Activated naive CD8-positive, alpha-beta T cell treated with anti-CD3 and anti-CD28 coated beads, Interleukin-2, amount 10 ng/mL, durations not matched to agents 7 days and 5 days (primary cell): ENCODE measurements at regions of chr22 and their contacts with region 1.

Region 1: GRCh38 chr22:36775964-36776669 is at the start of gene IFT27:
- DNase-seq: peak; percentile 92
- ATAC-seq: peak; percentile 95
- H3K4me3 Mint-ChIP-seq: peak within 1 kb of the TSS; percentile 83
- H3K27ac Mint-ChIP-seq: peak within 1 kb of the TSS; percentile 92
- H3K4me1 Mint-ChIP-seq: peaks cover 22% of the 10 kb centered on the region
- H3K27me3 Mint-ChIP-seq: no peaks in the 10 kb centered on the region
- total RNA-seq, gene IFT27: 23.5 to 27.8 TPM

Region 2: DNA sequence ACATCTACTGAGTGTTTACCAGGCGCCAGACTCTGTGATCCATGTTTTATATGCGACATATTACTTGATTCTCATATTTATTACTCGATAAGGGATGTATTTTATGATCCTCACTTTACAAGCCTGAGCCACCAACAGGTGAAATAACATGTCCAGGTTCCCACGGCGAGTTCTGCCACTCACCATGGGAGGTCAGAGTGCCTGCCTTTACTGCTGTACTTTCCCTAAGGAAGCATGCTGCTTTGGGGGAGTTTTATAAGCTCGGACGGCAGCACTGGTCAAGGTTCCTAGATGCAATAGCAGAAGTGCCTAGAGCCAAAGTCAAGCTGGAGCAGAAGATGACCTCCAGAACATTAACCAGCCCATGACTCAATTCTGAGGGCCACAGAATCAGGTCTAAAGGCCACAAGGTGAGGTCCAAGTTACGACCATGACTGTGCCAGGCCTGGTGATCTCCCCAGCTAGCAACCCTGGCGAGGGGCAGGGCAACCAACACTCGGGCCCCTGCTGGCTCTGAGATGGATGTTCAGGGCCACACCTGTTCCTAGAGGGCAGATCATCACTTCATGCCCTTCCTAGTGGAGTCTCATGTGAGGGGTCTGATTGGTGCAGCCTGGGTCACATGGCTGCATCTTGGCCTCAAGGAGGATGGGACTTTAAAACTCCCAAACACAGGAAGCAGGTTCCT is 14.4 kb before region 1 on chr22:
- POLR2A ChIA-PET with region 1: interaction called, 10 read pairs
- DNase-seq: no peak
- ATAC-seq: no peak
- H3K4me3 Mint-ChIP-seq: no peak overlapping the region
- H3K27ac Mint-ChIP-seq: no peak overlapping the region
- H3K4me1 Mint-ChIP-seq: no peaks in the 10 kb centered on the region
- H3K27me3 Mint-ChIP-seq: no peaks in the 10 kb centered on the region

Region 3: GRCh38 chr22:36860821-36861659 is 84.9 kb after region 1 on chr22 and contains the start of gene NCF4:
- POLR2A ChIA-PET with region 1: interaction called, 17 read pairs
- DNase-seq: peak; percentile 74
- ATAC-seq: peak; percentile 84
- H3K4me3 Mint-ChIP-seq: peak within 1 kb of the TSS; percentile 75
- H3K27ac Mint-ChIP-seq: peak within 1 kb of the TSS; percentile 94
- H3K4me1 Mint-ChIP-seq: peaks cover 57% of the 10 kb centered on the region
- H3K27me3 Mint-ChIP-seq: no peaks in the 10 kb centered on the region
- total RNA-seq, gene NCF4: 31.0 to 35.3 TPM